IMR-90 (cell line): ENCODE measurements at regions of chr14 and their contacts with region 1.

Region 1: DNA sequence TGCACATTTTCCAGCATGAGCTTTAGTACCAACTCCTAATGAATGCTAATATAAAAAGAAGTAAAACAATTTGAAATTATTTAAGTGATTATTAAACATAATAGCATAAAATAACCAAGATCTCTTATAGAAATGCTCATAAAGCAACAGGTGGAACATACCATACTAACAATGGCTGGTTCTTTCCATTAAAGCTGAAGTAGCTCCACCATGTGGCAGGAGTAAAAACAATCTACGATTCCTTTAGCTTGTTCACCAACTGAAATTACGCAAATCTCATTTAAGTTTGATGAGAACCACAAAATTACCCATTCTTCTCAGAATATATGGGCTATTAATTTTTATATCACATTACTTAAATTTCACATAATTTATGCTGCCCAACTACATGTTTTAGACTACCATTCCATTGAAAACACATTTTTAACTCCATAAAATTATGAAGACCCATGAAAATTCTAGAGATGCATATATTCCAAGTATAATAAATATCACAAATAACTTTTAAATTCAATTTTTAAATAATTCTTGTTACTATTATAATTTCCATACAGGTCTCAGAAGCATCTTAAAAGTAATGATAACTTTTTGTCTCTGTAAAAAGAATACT is 213.6 kb downstream of the DAD1 start:
- DNase-seq: peak; percentile 68
- ATAC-seq: no peak; the same call in 1 of the 2 replicates
- H3K4me3 ChIP-seq: no peak overlapping the region
- H3K27ac ChIP-seq: no peak overlapping the region
- H3K4me1 ChIP-seq: no peaks in the 10 kb centered on the region
- H3K27me3 ChIP-seq: peaks cover 24% of the 10 kb centered on the region
- CTCF ChIP-seq: peak; percentile 79
- POLR2A ChIP-seq: no peak
- RAD21 ChIP-seq: peak; percentile 70

Region 2: GRCh38 chr14:21891921-21892320 is 483.5 kb before region 1 on chr14:
- CTCF ChIA-PET with region 1: no interaction called
- POLR2A ChIA-PET with region 1: no interaction called
- dilution Hi-C with region 1: no loop called
- in situ Hi-C with region 1: no loop called
- intact Hi-C with region 1: no loop called
- DNase-seq: no peak
- ATAC-seq: no peak
- H3K4me3 ChIP-seq: no peak overlapping the region
- H3K27ac ChIP-seq: no peak overlapping the region
- H3K4me1 ChIP-seq: no peaks in the 10 kb centered on the region
- H3K27me3 ChIP-seq: no peaks in the 10 kb centered on the region
- CTCF ChIP-seq: no peak
- POLR2A ChIP-seq: no peak
- RAD21 ChIP-seq: no peak

Region 3: GRCh38 chr14:22163051-22163450 is 212.4 kb before region 1 on chr14:
- CTCF ChIA-PET with region 1: interaction called, 4 read pairs
- POLR2A ChIA-PET with region 1: no interaction called
- dilution Hi-C with region 1: no loop called
- in situ Hi-C with region 1: loop called (anchors 10 kb)
- intact Hi-C with region 1: loop called (anchors 2 kb)
- DNase-seq: peak; percentile 45
- ATAC-seq: peak; percentile 66; the same call in 1 of the 2 replicates
- H3K4me3 ChIP-seq: no peak overlapping the region
- H3K27ac ChIP-seq: no peak overlapping the region
- H3K4me1 ChIP-seq: no peaks in the 10 kb centered on the region
- H3K27me3 ChIP-seq: no peaks in the 10 kb centered on the region; the same call in 1 of the 2 replicates
- CTCF ChIP-seq: peak; percentile 55
- POLR2A ChIP-seq: no peak
- RAD21 ChIP-seq: peak; percentile 53

Region 4: DNA sequence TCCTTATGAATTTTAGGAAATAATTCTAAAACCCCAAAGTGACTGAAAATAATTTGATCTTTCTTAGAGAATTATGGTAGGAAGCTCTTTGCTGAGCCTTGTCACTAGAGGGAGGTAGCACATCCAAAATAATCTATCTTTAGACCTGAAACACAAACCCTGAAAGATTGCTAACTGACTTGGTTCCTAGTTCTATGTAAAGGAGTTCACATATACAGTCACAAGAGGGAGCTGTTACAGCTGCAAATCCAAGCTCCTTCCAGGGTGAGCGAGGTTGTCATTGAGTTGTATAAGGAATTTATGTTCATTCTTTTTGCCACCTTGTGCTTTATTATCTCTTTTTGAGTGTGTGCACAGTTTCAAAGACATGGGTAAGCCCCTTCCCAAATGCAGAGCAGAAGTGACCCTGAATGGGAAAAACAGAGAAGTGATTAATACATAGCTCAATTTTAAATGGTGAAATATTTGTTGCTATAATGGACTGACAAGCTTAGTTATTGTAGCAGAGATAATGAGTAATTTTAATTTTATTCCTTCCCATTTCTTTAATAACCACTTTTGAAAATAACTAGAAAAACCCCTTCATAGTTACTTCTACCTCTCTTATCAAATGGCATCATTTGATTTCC is 174.3 kb before region 1 on chr14:
- CTCF ChIA-PET with region 1: interaction called, 3 read pairs
- POLR2A ChIA-PET with region 1: no interaction called
- dilution Hi-C with region 1: no loop called
- in situ Hi-C with region 1: loop called (anchors 10 kb)
- intact Hi-C with region 1: no loop called
- DNase-seq: peak; percentile 82
- ATAC-seq: peak; percentile 98
- H3K4me3 ChIP-seq: no peak overlapping the region
- H3K27ac ChIP-seq: no peak overlapping the region
- H3K4me1 ChIP-seq: 0 out of 2 replicates have a peak, but pooled peaks cover 1% of the 10 kb centered on the region
- H3K27me3 ChIP-seq: no peaks in the 10 kb centered on the region
- CTCF ChIP-seq: peak; percentile 79
- POLR2A ChIP-seq: no peak
- RAD21 ChIP-seq: peak; percentile 72

Region 5: GRCh38 chr14:22291406-22291805 is 84.0 kb before region 1 on chr14:
- CTCF ChIA-PET with region 1: no interaction called
- POLR2A ChIA-PET with region 1: no interaction called
- dilution Hi-C with region 1: no loop called
- in situ Hi-C with region 1: no loop called
- intact Hi-C with region 1: no loop called
- DNase-seq: peak; percentile 66
- ATAC-seq: no peak
- H3K4me3 ChIP-seq: no peak overlapping the region
- H3K27ac ChIP-seq: no peak overlapping the region
- H3K4me1 ChIP-seq: peaks cover 7% of the 10 kb centered on the region
- H3K27me3 ChIP-seq: no peaks in the 10 kb centered on the region
- CTCF ChIP-seq: no peak
- POLR2A ChIP-seq: no peak
- RAD21 ChIP-seq: no peak

Region 6: DNA sequence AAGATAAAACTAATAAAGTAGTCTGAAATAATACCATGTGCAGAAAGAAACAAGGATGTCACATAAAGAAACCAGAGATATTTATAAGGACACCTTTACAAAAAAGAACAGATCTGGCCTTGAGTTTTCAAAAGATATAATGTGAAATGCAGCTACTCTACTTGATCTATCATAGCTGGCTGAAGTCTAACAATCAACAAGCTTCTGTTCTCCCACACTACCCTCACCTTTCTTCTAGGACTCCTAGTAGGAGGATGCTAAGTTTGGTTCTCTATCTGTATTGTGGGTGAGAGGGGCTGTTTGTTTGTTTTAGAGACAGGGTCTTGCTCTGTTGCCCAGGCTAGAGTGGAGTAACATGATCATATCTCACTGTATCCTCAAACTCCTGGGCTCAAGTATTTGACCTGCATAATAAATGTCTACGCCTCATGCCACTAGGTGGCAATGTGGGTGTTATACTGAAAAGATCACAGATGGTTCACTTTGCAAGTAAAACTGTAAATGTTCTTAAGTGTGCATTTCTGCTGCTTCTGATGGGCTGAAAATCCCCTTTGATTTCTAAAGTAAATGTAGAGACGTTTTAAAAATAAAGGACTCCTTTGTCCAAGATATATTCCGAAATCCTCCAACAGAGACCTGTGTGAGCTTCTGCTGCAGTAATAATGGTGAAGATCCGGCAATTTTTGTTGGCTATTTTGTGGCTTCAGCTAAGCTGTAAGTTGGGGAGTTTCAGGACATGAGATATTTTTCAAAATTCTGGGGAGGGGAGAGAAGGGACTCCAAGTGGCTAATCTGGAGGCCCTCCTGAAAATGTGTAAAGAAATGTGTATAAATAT is 55.7 kb before region 1 on chr14:
- CTCF ChIA-PET with region 1: interaction called, 21 read pairs
- POLR2A ChIA-PET with region 1: no interaction called
- dilution Hi-C with region 1: no loop called
- in situ Hi-C with region 1: no loop called
- intact Hi-C with region 1: loop called (anchors 1 kb)
- DNase-seq: peak; percentile 61
- ATAC-seq: peak; percentile 76
- H3K4me3 ChIP-seq: no peak overlapping the region
- H3K27ac ChIP-seq: no peak overlapping the region
- H3K4me1 ChIP-seq: no peaks in the 10 kb centered on the region
- H3K27me3 ChIP-seq: peaks cover 15% of the 10 kb centered on the region
- CTCF ChIP-seq: peak; percentile 60
- POLR2A ChIP-seq: no peak
- RAD21 ChIP-seq: peak; percentile 52

Region 7: DNA sequence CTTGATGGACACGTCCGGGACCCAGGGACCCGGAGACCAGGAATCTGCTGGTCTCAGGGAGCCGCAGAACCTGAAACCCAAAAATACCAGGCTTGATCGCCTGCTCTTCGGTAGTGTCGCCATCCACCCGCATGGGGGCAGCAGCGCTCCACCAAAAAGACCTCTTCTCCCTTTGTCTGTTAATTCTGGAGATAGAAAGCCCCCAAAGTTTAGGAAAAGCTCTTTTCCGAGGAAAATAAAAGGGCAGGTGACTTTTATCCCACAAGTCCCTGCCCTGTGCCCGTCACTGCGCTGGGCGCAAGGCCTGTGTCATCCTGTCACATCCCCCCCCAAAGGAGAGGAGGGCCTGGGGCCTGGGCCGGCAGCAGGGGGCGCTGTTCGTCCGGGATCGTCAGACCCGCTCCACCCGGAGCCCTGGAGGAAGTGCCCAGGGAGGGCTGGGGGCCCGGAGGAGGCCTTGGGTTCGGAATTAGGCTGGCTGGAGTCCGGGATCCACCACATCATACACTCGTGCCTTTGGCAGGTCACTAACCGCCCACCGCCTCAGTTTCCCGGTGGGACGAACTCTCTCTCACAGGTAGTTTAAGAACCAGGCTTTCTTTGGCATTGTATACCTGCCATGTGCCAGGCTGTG is 181.7 kb after region 1 on chr14:
- CTCF ChIA-PET with region 1: no interaction called
- POLR2A ChIA-PET with region 1: no interaction called
- dilution Hi-C with region 1: no loop called
- in situ Hi-C with region 1: no loop called
- intact Hi-C with region 1: no loop called
- DNase-seq: peak; percentile 64
- ATAC-seq: peak; percentile 94
- H3K4me3 ChIP-seq: peak overlapping the region; percentile 36
- H3K27ac ChIP-seq: peak overlapping the region; percentile 86
- H3K4me1 ChIP-seq: peaks cover 13% of the 10 kb centered on the region
- H3K27me3 ChIP-seq: no peaks in the 10 kb centered on the region
- CTCF ChIP-seq: peak; percentile 79
- POLR2A ChIP-seq: no peak
- RAD21 ChIP-seq: peak; percentile 79